Heart left ventricle (tissue), 16 donors: ENCODE measurements at regions of chr2 and their contacts with region 1.

Region 1: DNA sequence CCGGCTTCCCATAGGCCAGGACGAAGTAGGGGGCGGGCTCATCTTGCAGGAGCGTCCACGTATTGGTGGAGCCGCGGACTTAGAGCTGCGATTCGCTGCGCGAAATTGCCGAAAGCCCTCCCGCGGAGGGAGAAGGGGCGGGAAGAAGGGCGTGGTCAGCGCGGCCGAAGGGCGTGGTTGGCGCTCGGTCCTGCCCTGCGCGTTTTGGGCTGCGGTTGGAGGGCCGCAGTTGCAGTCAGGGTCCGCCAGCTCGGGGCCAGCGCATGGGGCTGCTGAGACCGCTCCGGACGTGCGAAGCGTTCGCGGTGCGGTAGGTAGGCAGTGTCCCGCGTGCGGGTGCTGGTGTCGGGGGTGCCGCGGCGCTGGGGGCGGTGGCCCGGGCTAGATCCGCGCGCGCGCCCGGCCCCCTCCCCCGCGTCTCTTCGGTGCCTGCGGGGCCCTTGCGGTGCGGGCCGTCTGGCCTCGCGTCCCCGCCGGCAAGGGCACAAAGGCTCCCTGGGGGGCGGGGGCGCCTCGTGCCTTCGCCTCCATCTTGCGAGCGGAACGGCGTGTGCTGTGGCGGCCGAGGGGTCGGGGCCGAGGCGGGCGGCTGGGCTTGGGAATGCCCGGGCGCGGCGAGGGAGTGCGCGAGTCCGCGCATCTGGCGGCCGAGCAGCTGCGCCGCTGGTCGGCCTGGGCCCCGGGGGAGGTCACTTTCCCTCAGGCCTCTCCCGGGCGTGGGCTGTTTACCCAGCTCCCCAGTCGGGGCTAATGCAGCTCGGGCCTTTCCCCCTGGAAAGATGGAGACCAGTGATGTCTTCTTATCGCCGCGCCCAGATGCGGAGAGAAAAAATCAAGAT is at the start of gene CEP68:
- DNase-seq: peak; percentile 98
- ATAC-seq: peak; percentile 98 to 99 (median 98)
- H3K4me3 ChIP-seq: peak within 1 kb of the TSS; percentile 60 to 92 (median 86)
- H3K27ac ChIP-seq: peak within 1 kb of the TSS; percentile 81 to 95 (median 90)
- H3K4me1 ChIP-seq: peaks cover 4 to 78% (median 47%) of the 10 kb centered on the region in 12 donors
- H3K27me3 ChIP-seq: no peaks in the 10 kb centered on the region
- CTCF ChIP-seq: no peak
- POLR2A ChIP-seq: peak; percentile 39 to 96
- total RNA-seq, gene CEP68: 14.0 to 26.8 (median 18.8) TPM

Region 2: GRCh38 chr2:65075605-65076344 is 19.3 kb after region 1 on chr2:
- intact Hi-C with region 1: loop called in 1 of 10 experiments (anchors 2 kb)
- DNase-seq: peak in 4 of 5 donors; percentile 65 to 73 (median 68)
- ATAC-seq: peak; percentile 71 to 92 (median 80)
- H3K4me3 ChIP-seq: no peak overlapping the region
- H3K27ac ChIP-seq: peak overlapping the region; percentile 12 to 74 (median 60)
- H3K4me1 ChIP-seq: peaks cover 8 to 56% (median 32%) of the 10 kb centered on the region in 12 donors
- H3K27me3 ChIP-seq: no peaks in the 10 kb centered on the region
- CTCF ChIP-seq: peak in 1 of 12 donors; percentile 14
- POLR2A ChIP-seq: no peak

Region 3: GRCh38 chr2:65164426-65164891 is 108.0 kb after region 1 on chr2:
- intact Hi-C with region 1: loop called in 2 of 10 experiments (anchors 5 to 10 kb)
- DNase-seq: peak in 2 of 5 donors; percentile 38 to 40
- ATAC-seq: peak; percentile 76 to 93 (median 85)
- H3K4me3 ChIP-seq: no peak overlapping the region
- H3K27ac ChIP-seq: peak overlapping the region in 10 of 12 donors; percentile 26 to 78 (median 60)
- H3K4me1 ChIP-seq: peaks cover 0 to 41% (median 16%) of the 10 kb centered on the region in 12 donors
- H3K27me3 ChIP-seq: no peaks in the 10 kb centered on the region
- CTCF ChIP-seq: no peak
- POLR2A ChIP-seq: no peak

Region 4: GRCh38 chr2:65186872-65187851 is 130.7 kb after region 1 on chr2:
- intact Hi-C with region 1: loop called in 6 of 10 experiments (anchors 5 kb)
- DNase-seq: peak; percentile 65 to 77 (median 74)
- ATAC-seq: peak; percentile 66 to 98 (median 94)
- H3K4me3 ChIP-seq: no peak overlapping the region
- H3K27ac ChIP-seq: no peak overlapping the region
- H3K4me1 ChIP-seq: peaks cover 0 to 7% (median 0%) of the 10 kb centered on the region in 12 donors
- H3K27me3 ChIP-seq: no peaks in the 10 kb centered on the region
- CTCF ChIP-seq: peak; percentile 73 to 94 (median 80)
- POLR2A ChIP-seq: no peak

Region 5: DNA sequence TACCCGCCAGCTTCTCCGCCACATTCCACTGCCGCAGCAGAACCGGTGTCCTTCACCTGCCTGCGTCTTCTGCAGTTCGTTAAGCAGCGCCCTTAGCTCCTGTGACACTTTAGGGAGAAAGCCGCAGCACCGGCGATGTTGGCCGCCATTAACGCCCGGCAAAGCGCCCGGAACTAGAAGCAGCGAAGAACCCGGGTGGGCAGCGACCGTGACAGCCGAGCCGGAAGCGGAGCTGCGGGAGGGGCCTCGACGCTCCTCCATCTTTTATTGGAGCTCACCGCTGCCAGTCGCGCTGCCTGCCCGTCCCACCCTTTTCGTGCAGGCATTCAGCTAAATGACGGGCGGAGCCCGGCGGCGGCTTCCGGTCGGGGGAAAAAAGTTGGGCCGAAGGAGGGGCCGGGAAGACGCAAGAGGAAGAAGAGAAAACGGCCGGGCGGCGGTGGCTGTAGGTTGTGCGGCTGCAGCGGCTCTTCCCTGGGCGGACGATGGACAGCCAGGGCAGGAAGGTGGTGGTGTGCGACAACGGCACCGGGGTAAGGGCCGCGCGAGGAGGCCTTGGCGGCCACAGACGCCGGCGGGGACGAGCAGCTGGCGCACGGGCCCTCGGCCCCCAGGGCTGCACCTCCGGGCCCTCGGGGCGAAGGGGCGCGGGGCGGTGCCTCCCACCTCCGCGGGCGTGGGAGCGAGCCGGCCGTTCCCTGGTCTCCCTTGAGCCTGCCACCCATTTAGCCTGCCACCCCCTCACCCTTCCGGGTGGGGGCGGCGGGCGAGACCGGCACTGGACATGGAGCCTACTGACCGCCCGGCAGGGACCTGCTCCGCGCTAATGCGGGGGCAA is 171.2 kb after region 1 on chr2 and contains the start of gene ACTR2:
- intact Hi-C with region 1: loop called in 2 of 10 experiments (anchors 5 kb)
- DNase-seq: peak; percentile 97 to 98 (median 98)
- ATAC-seq: peak; percentile 97 to 100 (median 99)
- H3K4me3 ChIP-seq: peak within 1 kb of the TSS; percentile 68 to 100 (median 94)
- H3K27ac ChIP-seq: peak within 1 kb of the TSS; percentile 89 to 100 (median 98)
- H3K4me1 ChIP-seq: peaks cover 6 to 52% (median 31%) of the 10 kb centered on the region in 12 donors
- H3K27me3 ChIP-seq: no peaks in the 10 kb centered on the region
- CTCF ChIP-seq: no peak
- POLR2A ChIP-seq: peak in 1 of 2 donors; percentile 59
- total RNA-seq, gene ACTR2: 32.6 to 216 (median 117) TPM